ENCODE measurements at regions of chr1 and their contacts with region 1.

Region 1: DNA sequence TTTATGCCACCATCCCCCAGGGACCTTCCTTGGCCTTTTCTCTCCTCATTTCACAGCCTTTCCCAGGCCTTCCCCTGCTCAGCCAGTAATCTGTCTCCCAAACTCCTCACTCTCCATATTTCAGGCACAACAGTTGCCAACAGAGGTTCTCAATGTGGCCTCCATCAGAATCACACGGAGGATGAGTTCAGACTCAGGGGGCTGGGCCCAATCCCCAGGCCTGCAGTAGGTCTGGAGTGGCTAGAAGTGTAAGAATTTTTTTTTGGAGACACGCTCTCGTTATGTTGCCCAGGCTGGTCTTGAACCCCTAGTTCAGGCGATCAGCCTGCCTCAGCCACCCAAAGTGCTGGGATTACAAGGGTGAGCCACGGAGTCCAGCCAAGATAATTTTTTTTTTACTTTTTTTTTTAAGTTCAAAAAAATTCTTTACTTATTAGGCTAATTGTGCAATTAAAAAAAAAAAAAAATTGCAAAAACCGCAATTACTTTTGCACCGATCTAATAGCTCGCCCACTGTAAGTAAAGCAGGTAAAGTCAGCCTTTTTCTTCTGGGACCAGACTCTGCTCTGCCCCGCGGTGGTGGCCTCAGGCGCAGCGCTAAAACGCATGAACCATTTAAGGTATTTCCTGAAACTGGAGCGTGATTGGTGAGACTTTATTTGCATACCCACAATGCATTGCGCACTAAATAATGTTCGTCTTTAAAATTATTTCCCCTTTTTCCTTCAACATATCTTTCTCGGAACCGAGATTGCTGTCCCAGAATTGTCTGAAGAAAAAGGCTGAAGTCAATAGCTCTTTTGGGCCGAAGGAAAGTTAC is 18.7 kb downstream of the KIAA2013 start:
- DNase-seq: peak; percentile 96
- ATAC-seq: peak; percentile 43
- H3K4me3 Mint-ChIP-seq: peak overlapping the region; percentile 87
- H3K27ac Mint-ChIP-seq: peak overlapping the region; percentile 100
- H3K4me1 Mint-ChIP-seq: peaks cover 41% of the 10 kb centered on the region
- H3K27me3 Mint-ChIP-seq: peaks cover 23% of the 10 kb centered on the region

Region 2: GRCh38 chr1:11805447-11806306 is 101.8 kb before region 1 on chr1 and contains the starts of genes CLCN6 and MTHFR:
- CTCF ChIA-PET with region 1: interaction called, 10 read pairs
- DNase-seq: peak; percentile 100
- ATAC-seq: peak; percentile 85
- H3K4me3 Mint-ChIP-seq: peak within 1 kb of the TSS; percentile 91
- H3K27ac Mint-ChIP-seq: peak within 1 kb of the TSS; percentile 90
- H3K4me1 Mint-ChIP-seq: peaks cover 66% of the 10 kb centered on the region
- H3K27me3 Mint-ChIP-seq: no peaks in the 10 kb centered on the region
- total RNA-seq, gene CLCN6: 20.0 to 21.1 TPM
- total RNA-seq, gene MTHFR: 24.1 to 30.0 TPM

Region 3: DNA sequence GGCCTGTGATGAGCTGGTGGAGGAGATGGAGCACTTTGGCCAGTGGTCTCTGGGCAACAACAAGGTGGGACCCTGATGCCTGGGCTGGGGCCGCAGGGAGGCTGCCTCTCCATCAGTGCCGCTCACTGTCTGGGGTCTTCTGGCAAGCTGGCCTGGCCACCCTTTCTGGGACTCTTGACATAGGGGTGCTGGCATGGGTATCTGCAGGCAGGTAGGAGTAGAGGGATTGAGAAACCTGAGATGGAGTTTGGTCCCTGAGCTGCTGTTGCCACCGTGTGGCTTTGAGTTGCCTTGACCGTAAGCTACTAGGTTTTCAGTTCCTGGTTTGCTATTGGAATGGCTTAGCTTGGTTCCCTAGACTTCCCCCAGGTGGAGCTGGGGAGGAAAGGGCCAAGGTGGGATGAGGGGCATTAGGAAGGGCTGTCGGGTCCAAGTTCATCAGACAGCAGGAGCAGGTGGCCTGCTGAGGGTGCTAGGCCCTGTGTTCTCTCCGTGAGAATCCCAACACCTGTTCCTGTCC is 59.6 kb after region 1 on chr1:
- CTCF ChIA-PET with region 1: interaction called, 12 read pairs
- DNase-seq: no peak
- ATAC-seq: peak; percentile 51
- H3K4me3 Mint-ChIP-seq: no peak overlapping the region
- H3K27ac Mint-ChIP-seq: no peak overlapping the region
- H3K4me1 Mint-ChIP-seq: peaks cover 5% of the 10 kb centered on the region
- H3K27me3 Mint-ChIP-seq: no peaks in the 10 kb centered on the region

Region 4: GRCh38 chr1:11979028-11979850 is 71.8 kb after region 1 on chr1:
- CTCF ChIA-PET with region 1: interaction called, 11 read pairs
- DNase-seq: no peak
- ATAC-seq: no peak
- H3K4me3 Mint-ChIP-seq: peak overlapping the region; percentile 99
- H3K27ac Mint-ChIP-seq: peak overlapping the region; percentile 84
- H3K4me1 Mint-ChIP-seq: peaks cover 47% of the 10 kb centered on the region
- H3K27me3 Mint-ChIP-seq: no peaks in the 10 kb centered on the region

Measured in activated CD8-positive, alpha-beta memory T cell treated with anti-CD3 and anti-CD28 coated beads, Interleukin-2, amount 10 ng/mL, durations not matched to agents 7 days and 5 days (primary cell).